ENCODE measurements at regions of chr10 and their contacts with region 1.

Region 1: GRCh38 chr10:119872860-119873681 is 428 bp upstream of the MCMBP start:
- DNase-seq: peak; percentile 90 to 93
- ATAC-seq: peak; percentile 98 to 99 (median 98)
- H3K4me3 ChIP-seq: peak overlapping the region; percentile 54 to 92 (median 79)
- H3K27ac ChIP-seq: peak overlapping the region; percentile 78 to 98 (median 92)
- H3K4me1 ChIP-seq: peaks cover 0 to 43% (median 25%) of the 10 kb centered on the region in 9 donors
- H3K27me3 ChIP-seq: no peaks in the 10 kb centered on the region
- CTCF ChIP-seq: peak in 1 of 9 donors; percentile 12

Region 2: DNA sequence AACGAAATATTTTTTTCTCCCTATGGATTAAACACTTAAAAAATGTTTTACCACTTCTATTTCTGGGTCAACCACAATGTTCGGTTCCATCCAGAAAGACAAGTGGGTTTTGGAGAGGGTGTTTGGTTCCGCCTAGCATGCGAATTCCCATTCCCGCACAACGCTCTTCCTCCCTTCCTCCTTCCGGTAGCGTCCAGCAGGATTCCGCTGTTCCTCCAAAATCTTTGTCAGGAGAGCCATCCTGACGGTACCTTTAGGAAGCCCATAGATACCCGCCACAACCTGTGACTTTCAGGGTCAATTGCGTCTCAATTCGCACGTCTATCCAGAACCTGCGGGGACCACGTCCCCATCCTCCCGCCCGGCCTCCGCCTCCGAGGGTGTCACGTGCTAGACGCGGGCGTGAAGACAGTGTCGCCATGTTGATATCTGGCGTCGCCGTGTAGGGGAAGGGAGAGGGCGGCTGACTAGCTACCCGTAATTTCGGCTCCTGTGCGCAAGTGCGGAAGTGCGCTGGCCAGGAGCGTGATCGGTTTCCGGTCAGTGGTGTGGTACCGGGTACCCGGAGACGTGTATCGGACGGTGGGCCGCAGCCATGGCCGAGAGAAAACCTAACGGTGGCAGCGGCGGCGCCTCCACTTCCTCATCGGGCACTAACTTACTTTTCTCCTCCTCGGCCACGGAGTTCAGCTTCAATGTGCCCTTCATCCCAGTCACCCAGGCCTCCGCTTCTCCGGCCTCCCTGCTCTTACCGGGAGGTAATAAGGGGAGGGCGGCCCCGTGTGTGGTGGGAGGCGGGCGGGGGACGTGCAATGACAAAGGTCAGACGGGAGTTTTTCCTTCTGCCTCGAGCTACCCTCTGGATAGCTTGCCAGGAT is 19.4 kb after region 1 on chr10 and contains the start of gene SEC23IP:
- intact Hi-C with region 1: loop called in 5 of 10 experiments (anchors 1 to 2 kb)
- DNase-seq: peak; percentile 96 to 97
- ATAC-seq: peak; percentile 99 to 100 (median 99)
- H3K4me3 ChIP-seq: peak within 1 kb of the TSS; percentile 69 to 98 (median 86)
- H3K27ac ChIP-seq: peak within 1 kb of the TSS; percentile 41 to 93 (median 87)
- H3K4me1 ChIP-seq: peaks cover 4 to 59% (median 42%) of the 10 kb centered on the region in 9 donors
- H3K27me3 ChIP-seq: no peaks in the 10 kb centered on the region
- CTCF ChIP-seq: peak in 2 of 9 donors; percentile 2 to 15
- total RNA-seq, gene SEC23IP: 24.0 to 43.9 (median 31.2) TPM

Measured in heart right ventricle (tissue), 16 donors.